GM12878 (cell line): ENCODE measurements at regions of chr3 and their contacts with region 1.

Region 1: DNA sequence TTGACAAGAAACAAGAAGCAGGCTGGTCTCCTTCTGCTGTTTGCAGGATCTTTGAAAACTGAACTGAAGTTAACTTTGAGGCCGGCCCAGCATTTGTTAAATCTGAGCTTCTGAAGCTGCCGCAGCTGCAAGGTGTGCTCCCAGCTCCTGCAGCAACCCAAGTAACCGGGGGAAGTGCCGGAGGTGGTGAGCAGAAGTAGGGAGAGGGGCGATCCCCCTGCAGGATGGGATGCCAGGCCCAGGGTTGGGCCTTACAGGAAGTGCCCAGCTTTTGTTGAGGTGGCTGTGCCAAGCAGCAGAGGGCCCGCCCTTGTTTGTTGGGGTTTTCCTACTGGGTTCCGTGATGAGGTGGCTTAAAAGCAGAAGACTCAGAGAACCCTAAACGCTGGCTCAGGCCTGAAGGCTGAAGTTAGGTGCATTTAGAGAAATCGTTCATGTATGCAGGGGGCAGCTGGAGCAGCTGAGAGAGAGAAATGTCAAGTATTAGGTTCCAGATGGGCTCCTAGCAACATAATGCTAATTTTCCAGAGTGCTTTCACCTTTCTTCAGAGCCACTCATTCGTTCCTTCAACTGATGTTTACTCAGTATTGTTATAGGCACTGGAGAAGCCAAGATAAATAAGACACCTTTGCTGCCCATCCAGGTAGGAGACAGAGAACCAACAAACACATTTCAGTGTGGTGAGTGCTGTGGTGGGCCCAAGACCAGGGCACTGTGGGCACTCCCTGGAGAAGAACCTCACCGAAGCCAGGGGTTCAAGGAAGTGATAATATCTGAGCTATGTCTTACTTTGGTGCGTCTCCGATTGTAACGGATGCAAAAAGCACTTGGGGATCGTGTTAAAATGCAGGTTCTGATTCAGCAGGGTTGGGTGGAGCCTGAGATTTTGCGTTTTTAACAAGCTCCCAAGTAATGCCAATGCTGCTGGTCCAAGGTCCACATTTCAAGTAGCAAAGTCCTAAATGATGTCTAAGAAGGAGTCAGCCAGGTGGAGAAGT is 42.2 kb upstream of the PLCL2 start:
- DNase-seq: peak; percentile 83
- ATAC-seq: peak; percentile 93
- H3K4me3 ChIP-seq: peak overlapping the region; percentile 36
- H3K27ac ChIP-seq: peak overlapping the region; percentile 77
- H3K4me1 ChIP-seq: peaks cover 45% of the 10 kb centered on the region
- H3K27me3 ChIP-seq: no peaks in the 10 kb centered on the region
- CTCF ChIP-seq: no peak
- EP300 ChIP-seq: peak in 1 of 2 experiments; percentile 16; a peak in 1 of 4 replicates
- POLR2A ChIP-seq: peak; percentile 58
- RAD21 ChIP-seq: no peak

Region 2: GRCh38 chr3:16665282-16665741 is 177.3 kb before region 1 on chr3:
- CTCF ChIA-PET with region 1: no interaction called
- POLR2A ChIA-PET with region 1: no interaction called
- RAD21 ChIA-PET with region 1: no interaction called
- SMC1A ChIA-PET with region 1: no interaction called
- in situ Hi-C with region 1: no loop called
- intact Hi-C with region 1: no loop called
- DNase-seq: no peak
- ATAC-seq: peak; percentile 38; the same call in 1 of the 3 replicates
- H3K4me3 ChIP-seq: no peak overlapping the region
- H3K27ac ChIP-seq: no peak overlapping the region
- H3K4me1 ChIP-seq: no peaks in the 10 kb centered on the region
- H3K27me3 ChIP-seq: 0 out of 4 replicates have a peak, but pooled peaks cover 0 to 3% of the 10 kb centered on the region in 2 experiments
- CTCF ChIP-seq: no peak
- EP300 ChIP-seq: no peak
- POLR2A ChIP-seq: no peak
- RAD21 ChIP-seq: no peak

Region 3: GRCh38 chr3:16816048-16816780 is 26.4 kb before region 1 on chr3:
- CTCF ChIA-PET with region 1: no interaction called
- POLR2A ChIA-PET with region 1: no interaction called
- RAD21 ChIA-PET with region 1: interaction called, 5 read pairs
- SMC1A ChIA-PET with region 1: interaction called, 10 read pairs
- in situ Hi-C with region 1: no loop called
- intact Hi-C with region 1: no loop called
- DNase-seq: peak; percentile 56
- ATAC-seq: peak; percentile 97
- H3K4me3 ChIP-seq: no peak overlapping the region
- H3K27ac ChIP-seq: no peak overlapping the region
- H3K4me1 ChIP-seq: peaks cover 11% of the 10 kb centered on the region
- H3K27me3 ChIP-seq: no peaks in the 10 kb centered on the region
- CTCF ChIP-seq: no peak
- EP300 ChIP-seq: no peak
- POLR2A ChIP-seq: no peak
- RAD21 ChIP-seq: no peak

Region 4: GRCh38 chr3:16828815-16829214 is 13.8 kb before region 1 on chr3:
- CTCF ChIA-PET with region 1: interaction called, 19 read pairs
- POLR2A ChIA-PET with region 1: interaction called, 4 read pairs
- RAD21 ChIA-PET with region 1: interaction called, 12 read pairs
- SMC1A ChIA-PET with region 1: interaction called, 32 read pairs
- in situ Hi-C with region 1: no loop called
- intact Hi-C with region 1: no loop called
- DNase-seq: no peak
- ATAC-seq: peak; percentile 90
- H3K4me3 ChIP-seq: no peak overlapping the region
- H3K27ac ChIP-seq: no peak overlapping the region
- H3K4me1 ChIP-seq: peaks cover 8% of the 10 kb centered on the region
- H3K27me3 ChIP-seq: no peaks in the 10 kb centered on the region
- CTCF ChIP-seq: peak; percentile 58 to 65 (median 60)
- EP300 ChIP-seq: no peak
- POLR2A ChIP-seq: no peak
- RAD21 ChIP-seq: peak; percentile 93

Region 5: DNA sequence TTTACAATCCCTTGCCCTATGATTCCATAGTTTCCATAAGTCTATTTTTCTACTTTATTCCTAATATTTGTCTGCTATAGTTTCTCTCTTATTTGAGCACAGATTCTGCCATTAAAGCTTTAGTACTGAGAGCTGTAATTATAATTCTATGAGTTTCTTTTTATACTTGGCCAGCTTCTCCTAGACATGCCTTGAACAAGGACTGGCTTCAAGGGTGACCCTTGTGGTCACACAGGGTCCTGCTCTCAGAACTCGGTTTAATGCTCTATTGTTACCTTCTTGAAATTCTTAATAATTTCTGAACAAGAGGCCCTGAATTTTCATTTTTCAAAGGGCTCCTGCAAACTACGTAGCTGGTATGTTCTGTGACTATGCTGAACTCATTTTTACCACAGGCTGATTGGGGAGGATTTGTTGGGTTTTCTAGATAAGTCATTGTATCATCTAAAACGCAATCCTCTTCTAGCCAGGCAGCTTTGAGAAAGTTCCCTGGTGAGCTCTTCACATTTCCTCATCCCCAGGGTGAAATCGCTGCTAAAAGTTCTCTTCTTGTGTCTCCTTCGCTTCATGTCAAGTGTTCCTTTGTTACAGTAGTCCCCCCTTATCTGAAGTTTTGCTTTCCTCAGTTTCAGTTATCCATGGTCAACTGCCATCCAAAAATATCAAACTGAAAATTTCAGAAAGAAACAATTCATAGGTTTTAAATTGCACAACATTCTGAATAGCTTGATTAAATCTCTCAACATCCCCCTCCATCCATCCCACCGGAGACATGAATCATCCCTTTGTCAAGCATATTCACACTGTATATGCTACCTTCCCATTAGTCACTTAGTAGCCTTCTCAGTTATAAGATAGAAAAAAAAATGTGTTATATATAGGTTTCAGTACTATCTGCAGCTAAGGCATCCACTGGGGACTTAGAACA is 29.6 kb after region 1 on chr3:
- CTCF ChIA-PET with region 1: interaction called, 3 read pairs
- POLR2A ChIA-PET with region 1: interaction called, 3 read pairs
- RAD21 ChIA-PET with region 1: interaction called, 4 read pairs
- SMC1A ChIA-PET with region 1: interaction called, 18 read pairs
- in situ Hi-C with region 1: no loop called
- intact Hi-C with region 1: no loop called
- DNase-seq: no peak
- ATAC-seq: no peak
- H3K4me3 ChIP-seq: no peak overlapping the region
- H3K27ac ChIP-seq: no peak overlapping the region
- H3K4me1 ChIP-seq: no peaks in the 10 kb centered on the region
- H3K27me3 ChIP-seq: no peaks in the 10 kb centered on the region
- CTCF ChIP-seq: no peak
- EP300 ChIP-seq: no peak
- POLR2A ChIP-seq: no peak
- RAD21 ChIP-seq: no peak

Region 6: DNA sequence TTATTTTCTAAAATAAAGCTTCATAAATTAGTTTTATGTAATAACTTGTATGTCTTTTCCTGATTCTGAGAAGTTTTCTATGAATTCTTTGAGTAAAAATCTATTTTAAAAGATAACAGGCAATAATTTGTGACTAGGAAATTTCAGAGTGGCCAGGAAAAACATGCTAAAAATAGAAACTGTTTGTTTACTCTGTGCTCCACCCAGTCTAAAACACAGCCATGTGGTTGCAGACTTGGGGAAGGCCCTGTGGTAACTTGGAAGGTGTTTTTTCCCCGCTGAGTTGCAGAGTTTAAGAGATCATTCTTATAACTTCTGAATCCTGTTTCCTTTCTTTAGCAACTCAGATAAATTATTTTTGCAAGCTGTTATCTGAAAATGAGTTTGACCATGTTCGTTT is 64.1 kb after region 1 on chr3:
- CTCF ChIA-PET with region 1: interaction called, 6 read pairs
- POLR2A ChIA-PET with region 1: no interaction called
- RAD21 ChIA-PET with region 1: interaction called, 5 read pairs
- SMC1A ChIA-PET with region 1: interaction called, 15 read pairs
- in situ Hi-C with region 1: no loop called
- intact Hi-C with region 1: no loop called
- DNase-seq: no peak
- ATAC-seq: peak; percentile 62
- H3K4me3 ChIP-seq: no peak overlapping the region
- H3K27ac ChIP-seq: peak overlapping the region; percentile 63
- H3K4me1 ChIP-seq: peaks cover 50% of the 10 kb centered on the region
- H3K27me3 ChIP-seq: no peaks in the 10 kb centered on the region
- CTCF ChIP-seq: no peak
- EP300 ChIP-seq: no peak
- POLR2A ChIP-seq: no peak
- RAD21 ChIP-seq: no peak

Region 7: GRCh38 chr3:17006132-17006852 is 163.7 kb after region 1 on chr3:
- CTCF ChIA-PET with region 1: no interaction called
- POLR2A ChIA-PET with region 1: interaction called, 11 read pairs
- RAD21 ChIA-PET with region 1: no interaction called
- SMC1A ChIA-PET with region 1: no interaction called
- in situ Hi-C with region 1: no loop called
- intact Hi-C with region 1: no loop called
- DNase-seq: no peak
- ATAC-seq: peak; percentile 72
- H3K4me3 ChIP-seq: no peak overlapping the region
- H3K27ac ChIP-seq: no peak overlapping the region
- H3K4me1 ChIP-seq: peaks cover 9% of the 10 kb centered on the region; the same call in 1 of the 2 replicates
- H3K27me3 ChIP-seq: no peaks in the 10 kb centered on the region
- CTCF ChIP-seq: no peak
- EP300 ChIP-seq: no peak
- POLR2A ChIP-seq: no peak
- RAD21 ChIP-seq: no peak